ENCODE measurements at regions of chr5 and their contacts with region 1.

Region 1: DNA sequence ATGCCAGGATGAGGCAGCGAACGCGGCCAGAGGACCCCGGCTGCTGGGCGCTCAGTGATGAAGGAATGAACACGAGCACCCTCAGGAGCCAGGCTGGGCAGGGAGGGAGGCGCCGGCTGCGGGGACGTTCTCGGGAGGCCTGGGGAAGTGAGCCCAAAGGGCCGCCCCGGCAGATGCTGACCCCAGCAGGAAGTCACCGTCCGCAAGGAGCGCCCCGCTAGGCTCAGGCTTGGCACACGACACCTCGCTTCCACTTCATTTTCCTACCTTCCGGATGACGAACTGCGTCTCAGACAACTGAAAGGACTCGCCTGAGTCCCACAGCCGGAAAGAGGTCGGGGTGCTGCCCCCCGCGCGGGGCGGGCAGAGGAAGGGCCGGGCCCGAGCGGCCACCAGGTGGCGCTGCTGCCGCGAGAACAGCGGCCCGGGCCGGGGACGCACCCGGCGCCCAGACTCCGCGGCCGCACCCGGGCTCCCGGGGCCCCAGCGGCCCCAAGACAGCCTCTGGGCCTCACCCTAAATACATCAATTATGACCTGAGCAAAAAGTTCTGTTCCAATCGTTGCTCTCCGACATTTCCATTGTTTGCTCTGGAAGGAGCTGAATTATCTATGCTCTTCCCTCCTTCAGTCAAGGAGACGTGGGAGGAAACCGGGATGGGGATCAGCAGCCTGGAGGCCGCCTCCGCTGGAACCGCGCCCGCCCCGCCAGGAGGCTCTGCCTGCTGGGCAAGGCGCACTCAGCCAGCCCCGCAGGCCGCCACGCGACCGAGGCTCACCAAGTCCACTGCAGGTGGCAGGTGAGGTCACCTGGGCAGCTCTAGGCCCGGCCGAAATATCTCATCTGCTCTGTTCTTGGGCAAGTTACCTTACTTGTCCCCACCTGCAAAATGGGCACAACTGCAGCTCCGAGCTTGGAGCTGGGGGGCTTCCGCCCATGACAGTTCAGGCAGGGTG is 107.0 kb downstream of the ZNF354C start:
- DNase-seq: peak in 1 of 2 experiments; percentile 43
- H3K4me3 ChIP-seq: no peak overlapping the region
- H3K27ac ChIP-seq: no peak overlapping the region
- H3K4me1 ChIP-seq: no peaks in the 10 kb centered on the region
- H3K27me3 ChIP-seq: peaks cover 89% of the 10 kb centered on the region
- CTCF ChIP-seq: peak; percentile 69

Region 2: DNA sequence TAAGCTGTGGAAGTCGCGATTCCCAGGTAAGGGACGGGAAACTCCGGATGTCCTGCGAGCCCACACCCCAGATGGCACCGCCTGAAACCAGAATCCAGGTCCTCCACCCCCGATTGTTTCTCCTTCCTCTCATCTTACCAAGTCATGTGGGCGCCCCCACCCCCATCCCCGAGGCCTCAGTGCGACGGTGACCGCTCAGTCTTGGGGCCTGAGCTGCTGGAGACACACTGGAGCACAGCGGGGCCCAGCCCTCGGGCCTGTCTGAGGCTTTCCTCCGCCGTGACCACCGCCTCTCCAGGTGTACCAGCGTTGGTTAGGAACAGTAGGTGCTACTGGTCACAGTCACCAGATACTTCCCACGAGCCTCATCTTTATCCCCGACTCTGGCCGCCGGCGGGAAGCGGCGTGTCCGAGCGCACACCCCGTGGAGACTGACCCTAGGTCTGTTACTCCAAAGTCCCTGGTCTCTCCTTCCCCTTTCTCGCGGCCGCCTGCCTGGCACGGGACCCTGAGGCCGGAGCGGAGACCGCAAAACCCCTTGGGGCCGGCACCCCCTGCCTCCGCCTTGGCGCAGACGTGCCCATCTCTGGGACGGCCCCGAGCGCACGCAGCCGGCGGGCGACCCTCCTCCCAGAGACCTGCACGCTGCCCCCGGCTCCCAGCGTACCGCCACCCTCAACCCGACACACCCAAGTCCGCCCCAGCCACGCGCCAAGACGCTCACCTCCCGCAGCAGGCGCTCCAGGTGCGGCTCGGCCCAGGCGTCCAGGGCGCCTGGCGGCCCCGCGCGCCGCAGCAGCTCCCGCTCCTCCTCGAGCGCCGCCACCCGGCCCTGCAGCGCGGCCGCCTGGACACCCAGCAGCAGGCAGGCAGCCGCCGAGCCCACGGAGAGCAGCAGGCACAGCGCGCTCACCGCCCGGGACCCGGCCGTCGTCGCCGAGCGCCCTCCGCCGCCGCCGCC is 577.7 kb before region 1 on chr5:
- CTCF ChIA-PET with region 1: no interaction called
- POLR2A ChIA-PET with region 1: no interaction called
- intact Hi-C with region 1: loop called (anchors 5 kb)
- DNase-seq: no peak
- H3K4me3 ChIP-seq: no peak overlapping the region
- H3K27ac ChIP-seq: no peak overlapping the region
- H3K4me1 ChIP-seq: no peaks in the 10 kb centered on the region
- H3K27me3 ChIP-seq: peaks cover 39% of the 10 kb centered on the region
- CTCF ChIP-seq: no peak

Region 3: DNA sequence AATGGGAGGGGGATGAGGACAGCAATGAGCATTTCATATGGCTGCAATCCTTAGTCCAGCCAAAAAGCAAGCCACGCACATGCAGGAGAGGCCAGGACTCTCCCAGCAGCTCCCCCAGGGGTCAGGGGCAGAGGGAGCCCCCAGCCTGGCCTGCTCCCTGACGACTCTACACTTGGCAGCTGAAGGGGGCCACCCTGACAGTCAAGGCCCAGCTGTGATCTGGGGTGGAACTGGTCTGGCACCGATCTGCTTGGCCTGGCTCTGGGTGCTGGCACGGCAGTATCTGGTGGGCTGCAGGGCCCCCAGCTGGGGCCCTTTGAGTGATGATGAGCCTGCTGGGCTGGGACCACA is 60.0 kb after region 1 on chr5:
- CTCF ChIA-PET with region 1: no interaction called
- POLR2A ChIA-PET with region 1: no interaction called
- intact Hi-C with region 1: no loop called
- DNase-seq: no peak
- H3K4me3 ChIP-seq: no peak overlapping the region
- H3K27ac ChIP-seq: no peak overlapping the region
- H3K4me1 ChIP-seq: no peaks in the 10 kb centered on the region
- H3K27me3 ChIP-seq: peaks cover 94% of the 10 kb centered on the region
- CTCF ChIP-seq: no peak

Region 4: GRCh38 chr5:179495906-179496455 is 328.8 kb after region 1 on chr5:
- CTCF ChIA-PET with region 1: no interaction called
- POLR2A ChIA-PET with region 1: no interaction called
- intact Hi-C with region 1: loop called (anchors 1 kb)
- DNase-seq: peak in 1 of 2 experiments; percentile 21
- H3K4me3 ChIP-seq: no peak overlapping the region
- H3K27ac ChIP-seq: no peak overlapping the region
- H3K4me1 ChIP-seq: no peaks in the 10 kb centered on the region
- H3K27me3 ChIP-seq: peaks cover 74% of the 10 kb centered on the region
- CTCF ChIP-seq: no peak; the same call in 1 of the 2 replicates